Ascending aorta (tissue), 2 donors: ENCODE measurements at regions of chr5 and their contacts with region 1.

Region 1: DNA sequence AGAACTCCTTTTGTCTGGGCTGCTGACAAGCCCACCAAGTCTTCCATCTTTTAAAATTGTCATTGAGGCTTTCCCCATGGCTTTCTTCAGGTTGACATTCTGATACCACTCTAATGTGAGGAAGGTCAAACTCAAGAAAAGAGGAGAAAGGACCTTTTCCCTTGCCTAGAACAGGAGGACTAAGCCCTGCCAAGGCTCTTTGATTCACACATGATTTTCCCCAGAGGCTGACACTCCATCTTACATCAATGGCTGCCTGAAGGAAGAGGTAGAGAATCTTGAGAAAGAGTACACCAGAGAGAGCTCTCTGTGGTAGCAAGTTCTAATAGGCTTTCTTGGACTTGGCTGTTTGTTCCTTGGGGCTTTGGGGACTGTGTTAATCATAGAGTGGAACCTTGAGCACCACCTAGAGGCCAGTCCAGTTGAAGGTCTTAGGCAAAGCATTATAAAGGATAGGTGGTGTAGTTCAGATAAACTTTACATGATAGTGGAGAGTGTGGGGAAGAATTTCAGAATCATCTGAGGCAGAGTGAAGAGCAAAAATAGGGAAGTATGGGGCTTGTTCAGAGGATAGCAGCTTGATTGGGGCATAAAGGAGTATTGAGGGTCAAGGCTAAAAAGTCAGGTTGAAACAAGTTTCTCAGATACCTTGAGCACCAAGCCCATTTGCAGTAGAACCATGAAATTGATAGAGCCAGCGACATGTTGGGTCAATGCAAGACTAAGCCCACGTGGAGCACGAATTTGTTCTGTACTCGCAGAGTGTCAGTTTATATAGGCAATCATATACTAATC is 36.7 kb downstream of the NDFIP1 start:
- DNase-seq: peak in 1 of 2 donors; percentile 77
- H3K4me3 ChIP-seq: no peak overlapping the region
- H3K27ac ChIP-seq: no peak overlapping the region
- H3K4me1 ChIP-seq: peaks cover 0 to 3% of the 10 kb centered on the region in 2 donors
- H3K27me3 ChIP-seq: no peaks in the 10 kb centered on the region
- CTCF ChIP-seq: peak; percentile 44 to 74 (median 59)

Region 2: DNA sequence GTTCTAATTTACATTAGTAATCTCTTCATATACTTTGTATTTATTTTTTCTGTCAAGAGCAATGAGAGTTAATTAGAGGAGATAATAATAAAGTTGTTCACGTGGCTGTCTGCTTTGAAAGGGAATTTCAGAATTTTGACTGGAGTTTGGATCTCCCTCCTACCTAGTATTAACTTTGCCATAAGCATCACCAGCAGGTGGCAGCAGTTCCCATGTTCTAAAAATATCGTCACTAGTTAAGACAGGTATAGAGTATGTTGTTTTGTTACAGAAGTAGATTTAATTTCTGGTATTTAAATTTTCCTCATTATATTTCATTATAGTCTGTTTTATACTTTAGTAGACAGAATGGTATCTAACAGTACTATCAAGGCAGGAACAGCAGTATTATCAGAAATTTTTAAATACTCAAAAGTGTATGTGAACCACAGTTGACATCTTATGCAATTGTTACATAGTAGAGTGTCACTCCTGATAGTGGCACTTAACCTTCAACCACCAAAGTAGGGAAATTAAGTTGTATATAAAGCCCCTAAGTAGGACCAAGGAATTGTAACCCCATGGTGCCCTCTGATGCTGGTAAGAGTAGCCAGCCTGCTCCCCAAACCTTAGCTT is 152.8 kb before region 1 on chr5:
- intact Hi-C with region 1: loop called (anchors 1 kb)
- DNase-seq: peak in 1 of 2 donors; percentile 83
- H3K4me3 ChIP-seq: no peak overlapping the region
- H3K27ac ChIP-seq: no peak overlapping the region
- H3K4me1 ChIP-seq: no peaks in the 10 kb centered on the region
- H3K27me3 ChIP-seq: no peaks in the 10 kb centered on the region
- CTCF ChIP-seq: peak; percentile 54 to 80 (median 72)

Region 3: GRCh38 chr5:142108432-142109330 is 36.6 kb before region 1 on chr5 and contains the start of gene NDFIP1:
- intact Hi-C with region 1: loop called (anchors 5 kb)
- DNase-seq: peak; percentile 47 to 90
- H3K4me3 ChIP-seq: peak within 1 kb of the TSS; percentile 85 to 93
- H3K27ac ChIP-seq: peak within 1 kb of the TSS; percentile 98 to 100
- H3K4me1 ChIP-seq: peaks cover 11 to 36% of the 10 kb centered on the region in 2 donors
- H3K27me3 ChIP-seq: no peaks in the 10 kb centered on the region
- CTCF ChIP-seq: peak in 2 of 3 experiments; percentile 15 to 25
- total RNA-seq, gene NDFIP1: 310 TPM